ENCODE measurements at regions of chr2 and their contacts with region 1.

Region 1: DNA sequence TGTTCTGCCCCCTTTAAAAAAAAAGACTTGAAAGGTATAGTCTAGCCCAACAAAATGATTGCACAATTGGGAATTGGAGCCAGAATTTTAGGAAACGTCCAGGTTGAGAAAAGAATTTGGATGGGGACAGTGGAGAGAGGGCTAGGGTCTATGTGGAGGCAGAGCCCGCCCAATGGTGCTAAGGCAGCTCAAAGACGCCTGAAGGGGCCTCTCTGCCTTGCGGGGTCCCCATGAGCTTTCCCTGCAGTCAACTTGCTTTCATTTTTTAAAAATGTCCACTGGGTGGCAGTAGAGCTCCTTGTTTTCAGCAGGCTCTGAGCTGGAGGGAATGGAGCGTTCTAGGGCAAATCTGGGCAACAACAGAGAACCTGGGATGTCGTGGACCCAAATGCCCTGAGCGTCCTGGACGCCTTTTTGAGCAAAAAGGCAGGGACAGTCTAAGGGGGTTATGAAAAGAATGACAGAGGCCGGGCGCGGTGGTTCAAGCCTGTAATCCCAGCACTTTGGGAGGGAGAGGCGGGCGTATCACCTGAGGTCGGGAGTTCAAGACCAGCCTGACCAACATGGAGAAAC is 40.2 kb upstream of the ITM2C start:
- DNase-seq: no peak
- ATAC-seq: peak; percentile 52

Region 2: DNA sequence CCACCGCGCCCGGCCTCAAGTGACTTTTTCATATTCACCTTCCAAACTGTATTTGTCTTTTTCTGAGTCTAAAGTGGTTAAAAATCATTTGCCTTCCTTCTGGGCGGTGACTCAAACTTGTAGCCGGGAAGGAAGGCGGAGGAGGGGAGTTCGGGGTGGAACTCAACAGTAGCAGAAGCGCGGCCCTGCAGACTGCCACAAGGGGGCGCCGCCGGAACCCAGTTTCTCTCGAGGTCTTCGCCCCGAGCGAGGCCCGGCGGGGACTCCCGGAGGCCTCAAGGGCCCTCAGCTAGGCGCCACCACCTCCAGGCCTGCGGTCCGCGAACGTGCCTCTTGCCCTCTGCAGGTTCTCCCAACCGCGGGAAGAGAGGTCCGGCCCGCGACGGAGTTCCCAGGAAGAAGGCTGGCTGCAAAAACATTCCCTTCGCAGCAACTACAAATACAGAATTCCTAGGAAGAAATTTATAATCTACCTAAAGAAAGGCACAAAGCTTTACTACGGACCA is 23.4 kb after region 1 on chr2:
- intact Hi-C with region 1: loop called (anchors 2 kb)
- DNase-seq: peak; percentile 92
- ATAC-seq: peak; percentile 81

Region 3: DNA sequence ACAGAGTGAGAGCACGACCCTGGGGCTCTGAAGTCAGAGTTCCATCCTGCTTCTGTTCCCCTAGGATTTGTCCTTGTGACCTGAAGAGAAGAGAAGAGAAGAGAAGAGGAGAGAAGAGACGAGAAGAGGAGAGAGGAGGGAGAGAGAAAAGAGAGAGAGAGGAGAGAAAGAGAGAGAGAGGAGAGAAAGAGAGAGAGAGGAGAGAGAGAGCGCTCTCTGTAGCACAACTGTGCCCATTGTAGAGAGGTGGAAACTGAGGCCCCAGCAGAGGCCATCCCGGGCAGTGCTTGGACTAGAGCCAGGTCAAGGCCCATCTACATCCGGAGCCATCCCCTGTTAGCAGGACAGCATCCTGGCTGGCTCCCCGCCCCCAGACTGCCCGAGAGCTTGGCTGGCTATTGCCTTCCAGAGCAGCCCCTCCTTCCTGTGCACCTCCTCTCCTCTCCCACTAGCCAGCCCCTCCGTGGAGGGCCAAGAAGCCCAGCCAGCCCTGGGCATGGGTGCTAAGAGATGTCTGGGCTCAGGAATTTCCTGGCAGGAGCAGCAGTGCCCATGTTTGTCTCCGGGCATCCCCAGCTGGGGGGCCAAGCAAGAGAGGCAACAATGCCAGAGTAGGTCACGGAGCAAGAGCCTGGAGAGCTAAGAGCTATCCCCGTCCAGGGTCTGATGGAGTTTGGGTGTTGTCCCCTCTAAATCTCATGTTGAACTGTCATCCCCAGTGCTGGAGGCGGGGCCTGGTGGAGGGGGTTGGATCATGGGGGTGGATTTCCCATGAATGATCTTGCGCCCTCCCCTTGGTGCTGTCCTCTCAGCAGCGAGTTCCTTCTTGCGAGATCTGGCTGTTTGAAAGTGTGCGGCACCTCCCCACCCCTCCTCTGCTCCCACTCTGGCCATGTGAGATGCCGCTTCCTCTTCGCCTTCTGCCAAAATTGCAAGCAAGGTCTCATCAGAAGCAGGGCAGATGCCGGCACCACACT is 118.7 kb after region 1 on chr2:
- intact Hi-C with region 1: no loop called
- DNase-seq: no peak
- ATAC-seq: peak; percentile 55

Region 4: DNA sequence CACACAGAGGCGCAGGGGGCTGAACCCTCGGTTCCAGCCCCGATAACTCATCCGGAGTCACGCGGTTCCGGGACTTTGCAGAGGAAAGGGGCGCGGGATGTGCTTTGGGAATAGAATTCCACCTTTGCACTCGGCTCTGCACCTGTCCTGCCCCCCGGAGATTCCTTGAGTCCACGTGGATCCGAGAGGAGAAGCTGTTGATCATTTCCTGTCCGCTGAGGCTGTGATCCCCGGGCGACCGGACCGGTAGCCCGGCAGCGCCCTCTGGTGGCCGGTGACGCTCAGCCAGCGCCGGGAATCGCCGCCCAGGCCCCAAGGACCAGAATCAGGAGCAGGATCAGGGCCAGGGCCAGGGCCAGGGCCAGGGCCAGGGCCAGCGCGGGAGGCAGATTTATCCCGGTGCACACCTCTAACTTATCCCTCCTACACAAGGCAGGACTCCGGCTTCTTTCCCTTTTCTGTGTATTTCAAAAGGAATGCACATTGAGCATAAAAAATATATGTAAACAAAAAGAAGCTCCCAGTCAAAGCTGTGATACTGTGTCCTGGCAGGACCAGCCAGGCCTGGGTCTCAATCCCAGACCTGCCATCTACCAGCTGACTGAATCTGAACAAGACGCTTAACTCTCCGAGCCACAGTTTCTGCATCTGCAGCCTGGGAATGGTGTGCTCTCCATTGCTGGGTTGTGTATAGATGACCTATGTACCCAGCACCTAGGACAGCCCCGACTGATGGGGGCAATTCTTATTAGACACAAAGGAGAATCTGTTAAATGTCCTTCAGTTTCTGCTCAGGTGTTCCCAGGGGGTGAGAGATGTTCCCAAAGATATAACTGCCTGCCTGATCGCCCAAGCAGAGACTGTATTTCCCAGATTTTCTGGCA is 162.9 kb after region 1 on chr2:
- intact Hi-C with region 1: loop called (anchors 1 kb)
- DNase-seq: peak; percentile 93
- ATAC-seq: peak; percentile 82

Region 5: DNA sequence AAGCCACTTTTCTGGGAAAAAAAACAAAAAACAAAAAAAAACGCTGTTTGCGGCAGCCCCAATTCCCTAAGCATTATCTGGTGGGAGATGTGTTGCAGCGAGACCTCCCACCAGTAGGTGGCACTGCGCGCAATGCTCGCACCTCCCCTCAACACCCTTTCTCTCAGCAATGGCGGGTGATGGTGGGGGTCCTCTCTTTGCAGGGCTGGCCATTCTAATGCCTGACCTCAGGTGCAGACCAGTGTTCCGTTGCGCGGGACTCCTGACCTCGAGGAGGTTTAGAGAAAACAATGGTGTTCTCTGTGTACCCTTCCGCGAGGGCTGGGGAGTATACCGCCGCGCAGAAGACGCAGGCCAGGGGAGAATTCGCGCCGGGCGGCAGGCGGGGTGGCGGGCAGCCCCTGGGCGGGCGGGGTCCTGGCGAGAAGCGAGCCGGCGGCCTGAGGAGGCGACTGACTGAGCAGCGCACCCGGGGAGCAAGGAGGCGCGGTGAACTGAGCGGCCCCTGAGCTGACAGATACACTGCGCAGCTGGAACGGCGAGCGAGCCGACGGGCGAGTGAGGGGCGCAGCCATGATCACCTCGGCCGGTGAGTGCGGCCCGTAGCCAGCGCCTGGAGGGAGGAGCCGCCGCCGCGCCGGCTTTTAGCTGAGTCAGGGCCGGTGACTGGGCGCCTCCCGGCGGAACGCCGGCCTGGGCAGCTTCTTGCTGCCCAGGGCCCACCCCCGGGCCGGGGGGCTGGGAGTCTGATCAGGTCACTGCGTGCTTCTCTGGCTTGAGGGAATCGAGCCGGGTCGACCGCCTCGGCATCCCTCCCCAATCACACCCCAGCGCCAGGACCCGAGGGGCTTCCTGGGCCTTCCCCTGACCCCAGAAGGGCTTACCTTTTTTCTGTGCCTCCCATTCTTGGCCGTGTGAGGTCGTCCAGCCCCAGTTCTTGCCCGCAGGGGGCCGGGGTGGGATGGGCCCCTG is 232.2 kb after region 1 on chr2 and contains the start of gene PSMD1:
- intact Hi-C with region 1: loop called (anchors 5 kb)
- DNase-seq: peak; percentile 95
- ATAC-seq: peak; percentile 93
- total RNA-seq, gene PSMD1: 86.3 TPM

Measured in Right ventricle myocardium inferior (tissue), 1 donor.